ENCODE measurements at regions of chr1 and their contacts with region 1.

Region 1: GRCh38 chr1:160711602-160712311 is at the start of gene CD48:
- DNase-seq: peak; percentile 80
- ATAC-seq: peak; percentile 54
- H3K4me3 ChIP-seq: peak within 1 kb of the TSS; percentile 87 to 100 (median 98)
- H3K4me3 Mint-ChIP-seq: no peak within 1 kb of the TSS
- H3K27ac ChIP-seq: peak within 1 kb of the TSS; percentile 89 to 95
- H3K27ac Mint-ChIP-seq: no peak within 1 kb of the TSS
- H3K4me1 ChIP-seq: peaks cover 62 to 64% of the 10 kb centered on the region in 2 donors
- H3K4me1 Mint-ChIP-seq: peaks cover 26% of the 10 kb centered on the region
- H3K27me3 ChIP-seq: no peaks in the 10 kb centered on the region
- H3K27me3 Mint-ChIP-seq: no peaks in the 10 kb centered on the region
- CTCF ChIP-seq: no peak
- total RNA-seq, gene CD48: 252 and 255 TPM in 2 replicates

Region 2: DNA sequence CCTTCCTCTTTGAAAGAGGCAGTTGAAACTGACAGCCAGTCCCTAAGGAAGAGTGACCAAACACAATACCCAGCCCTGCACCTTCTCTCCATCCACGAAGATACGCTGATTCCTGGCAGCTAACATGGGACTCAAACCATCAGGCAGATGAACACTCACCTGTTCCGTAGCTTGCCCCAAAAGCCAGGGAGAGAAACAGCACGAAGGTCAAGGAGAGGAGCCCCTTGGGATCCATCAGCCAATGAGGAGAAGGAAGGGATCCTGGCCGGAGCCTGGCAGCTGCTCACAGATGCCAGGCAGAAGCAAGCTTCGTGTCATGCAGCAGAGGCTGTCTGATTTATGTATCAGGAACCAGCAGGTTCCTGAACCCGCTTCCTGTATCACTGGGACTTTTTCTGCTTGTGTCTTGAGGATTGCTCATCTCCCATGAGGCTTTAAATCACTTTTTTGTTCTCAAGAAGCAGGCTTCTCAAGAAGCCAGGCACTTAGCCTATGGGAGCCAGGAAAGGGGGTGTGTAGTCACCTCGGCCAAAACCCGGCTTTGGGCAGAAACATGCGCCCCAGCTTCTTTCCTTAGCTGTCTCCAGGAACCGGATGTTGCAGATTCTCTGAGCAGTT is 64.9 kb before region 1 on chr1 and contains the start of gene SLAMF1:
- CTCF ChIA-PET with region 1: interaction called, 4 read pairs
- POLR2A ChIA-PET with region 1: no interaction called
- intact Hi-C with region 1: loop called (anchors 2 kb)
- DNase-seq: peak; percentile 72
- ATAC-seq: peak; percentile 70
- H3K4me3 ChIP-seq: peak within 1 kb of the TSS; percentile 56 to 86 (median 78)
- H3K4me3 Mint-ChIP-seq: peak within 1 kb of the TSS; percentile 93
- H3K27ac ChIP-seq: peak within 1 kb of the TSS; percentile 73 to 93
- H3K27ac Mint-ChIP-seq: peak within 1 kb of the TSS; percentile 91
- H3K4me1 ChIP-seq: peaks cover 71 to 85% of the 10 kb centered on the region in 2 donors
- H3K4me1 Mint-ChIP-seq: peaks cover 88% of the 10 kb centered on the region
- H3K27me3 ChIP-seq: no peaks in the 10 kb centered on the region
- H3K27me3 Mint-ChIP-seq: no peaks in the 10 kb centered on the region
- CTCF ChIP-seq: no peak
- total RNA-seq, gene SLAMF1: 42.3 and 45.6 TPM in 2 replicates

Region 3: GRCh38 chr1:160681067-160681890 is 30.5 kb before region 1 on chr1:
- CTCF ChIA-PET with region 1: interaction called, 62 read pairs
- POLR2A ChIA-PET with region 1: no interaction called
- intact Hi-C with region 1: loop called (anchors 1 kb)
- DNase-seq: peak; percentile 89
- ATAC-seq: peak; percentile 93
- H3K4me3 ChIP-seq: no peak overlapping the region
- H3K4me3 Mint-ChIP-seq: no peak overlapping the region
- H3K27ac ChIP-seq: peak overlapping the region in 1 of 2 donors; percentile 82
- H3K27ac Mint-ChIP-seq: peak overlapping the region; percentile 72
- H3K4me1 ChIP-seq: peaks cover 38 to 45% of the 10 kb centered on the region in 2 donors
- H3K4me1 Mint-ChIP-seq: peaks cover 51% of the 10 kb centered on the region
- H3K27me3 ChIP-seq: no peaks in the 10 kb centered on the region
- H3K27me3 Mint-ChIP-seq: no peaks in the 10 kb centered on the region
- CTCF ChIP-seq: peak; percentile 92

Region 4: DNA sequence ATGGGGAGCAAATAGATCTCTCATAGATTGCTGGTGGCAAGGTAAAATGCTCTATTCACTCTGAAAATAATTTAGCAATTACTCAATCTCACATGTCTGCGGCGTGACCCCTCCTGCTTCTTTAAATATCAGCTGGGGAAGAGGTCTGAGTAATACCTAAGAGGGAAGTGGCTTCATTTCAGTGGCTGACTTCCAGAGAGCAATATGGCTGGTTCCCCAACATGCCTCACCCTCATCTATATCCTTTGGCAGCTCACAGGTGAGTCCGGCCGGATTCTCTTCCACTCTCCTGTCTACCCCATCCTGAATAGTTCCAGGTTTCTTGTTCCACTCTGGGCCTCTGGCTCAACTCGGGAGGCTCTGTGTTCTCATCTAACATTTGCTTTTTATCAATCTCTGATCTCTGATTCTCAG is 27.3 kb after region 1 on chr1 and contains the start of gene SLAMF7:
- CTCF ChIA-PET with region 1: no interaction called
- POLR2A ChIA-PET with region 1: no interaction called
- intact Hi-C with region 1: loop called (anchors 2 kb)
- DNase-seq: peak; percentile 75
- ATAC-seq: peak; percentile 92
- H3K4me3 ChIP-seq: peak within 1 kb of the TSS in 4 of 5 experiments; percentile 9 to 50 (median 31)
- H3K4me3 Mint-ChIP-seq: peak within 1 kb of the TSS; percentile 91
- H3K27ac ChIP-seq: peak within 1 kb of the TSS; percentile 41 to 70
- H3K27ac Mint-ChIP-seq: peak within 1 kb of the TSS; percentile 87
- H3K4me1 ChIP-seq: peaks cover 25 to 39% of the 10 kb centered on the region in 2 donors
- H3K4me1 Mint-ChIP-seq: peaks cover 61% of the 10 kb centered on the region
- H3K27me3 ChIP-seq: no peaks in the 10 kb centered on the region
- H3K27me3 Mint-ChIP-seq: no peaks in the 10 kb centered on the region
- CTCF ChIP-seq: no peak
- total RNA-seq, gene SLAMF7: 51.6 and 52.6 TPM in 2 replicates